Dendritic cell treated with granulocyte-macrophage colony-stimulating factor and Interleukin-4, amounts not matched to agents 40 ng/mL and 50 ng/mL, for 4 days (primary cell): ENCODE measurements at regions of chr11 and their contacts with region 1.

Region 1: DNA sequence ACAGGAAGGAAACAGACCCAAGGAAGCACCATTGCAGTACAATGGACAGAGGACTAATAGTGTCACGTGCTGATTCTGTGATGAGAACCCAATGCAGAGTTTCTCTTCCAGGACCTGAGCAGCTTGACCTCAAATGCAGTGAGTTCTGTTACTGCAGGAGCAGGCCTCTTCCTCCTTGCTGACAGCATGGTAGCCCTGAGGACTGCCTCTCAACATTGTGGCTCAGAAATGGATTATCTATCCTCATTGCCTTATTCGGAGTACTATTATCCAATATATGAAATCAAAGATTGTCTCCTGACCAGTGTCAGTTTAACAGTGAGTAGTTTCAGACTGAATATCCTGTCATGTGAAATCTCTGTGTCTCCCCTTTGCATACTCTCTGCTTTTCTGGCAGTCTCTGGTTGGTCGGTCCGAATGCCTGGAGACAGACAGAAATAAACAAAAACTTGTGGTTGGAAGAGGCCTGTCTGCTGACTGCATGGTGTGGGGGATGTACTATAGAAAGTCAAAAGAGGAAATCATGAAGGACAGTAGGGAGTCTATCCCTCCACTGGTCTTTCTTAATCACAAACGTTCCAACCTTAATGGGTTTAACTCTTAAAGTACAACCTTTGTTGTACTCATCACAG is 6.9 kb upstream of the MS4A14 start:
- H3K4me3 Mint-ChIP-seq: no peak overlapping the region
- H3K27ac Mint-ChIP-seq: peak overlapping the region; percentile 81
- H3K4me1 Mint-ChIP-seq: peaks cover 73% of the 10 kb centered on the region
- H3K27me3 Mint-ChIP-seq: no peaks in the 10 kb centered on the region

Region 2: DNA sequence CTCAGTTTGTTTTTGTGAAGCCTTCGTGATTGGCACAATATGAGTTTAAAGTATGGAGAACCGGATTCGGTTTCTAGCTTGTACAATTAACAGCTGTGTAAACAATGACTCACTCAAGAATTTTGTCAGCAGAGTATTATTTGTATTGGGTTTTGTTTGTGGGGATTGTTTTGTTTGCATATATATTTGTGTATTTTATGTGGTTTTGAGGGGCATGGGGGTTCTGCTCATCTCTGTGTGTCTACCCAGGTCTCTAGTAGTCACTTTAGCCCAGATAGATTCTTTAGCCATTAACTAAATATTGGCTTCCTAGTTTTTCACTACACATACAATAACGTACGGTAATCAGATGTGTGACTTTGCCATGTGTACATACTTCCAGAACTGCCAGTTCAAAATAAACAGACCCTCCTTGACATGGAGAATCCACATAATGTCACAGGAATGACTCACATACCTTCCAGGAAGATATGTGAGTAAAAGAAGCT is 18.5 kb before region 1 on chr11:
- intact Hi-C with region 1: loop called (anchors 1 kb)
- H3K4me3 Mint-ChIP-seq: no peak overlapping the region
- H3K27ac Mint-ChIP-seq: peak overlapping the region; percentile 66
- H3K4me1 Mint-ChIP-seq: peaks cover 55% of the 10 kb centered on the region
- H3K27me3 Mint-ChIP-seq: no peaks in the 10 kb centered on the region